Activated CD4-positive, alpha-beta T cell treated with anti-CD3 and anti-CD28 coated beads, Interleukin-2, amount 10 ng/mL, durations not matched to agents 24 days and 14 days (primary cell): ENCODE measurements at regions of chr4 and their contacts with region 1.

Region 1: DNA sequence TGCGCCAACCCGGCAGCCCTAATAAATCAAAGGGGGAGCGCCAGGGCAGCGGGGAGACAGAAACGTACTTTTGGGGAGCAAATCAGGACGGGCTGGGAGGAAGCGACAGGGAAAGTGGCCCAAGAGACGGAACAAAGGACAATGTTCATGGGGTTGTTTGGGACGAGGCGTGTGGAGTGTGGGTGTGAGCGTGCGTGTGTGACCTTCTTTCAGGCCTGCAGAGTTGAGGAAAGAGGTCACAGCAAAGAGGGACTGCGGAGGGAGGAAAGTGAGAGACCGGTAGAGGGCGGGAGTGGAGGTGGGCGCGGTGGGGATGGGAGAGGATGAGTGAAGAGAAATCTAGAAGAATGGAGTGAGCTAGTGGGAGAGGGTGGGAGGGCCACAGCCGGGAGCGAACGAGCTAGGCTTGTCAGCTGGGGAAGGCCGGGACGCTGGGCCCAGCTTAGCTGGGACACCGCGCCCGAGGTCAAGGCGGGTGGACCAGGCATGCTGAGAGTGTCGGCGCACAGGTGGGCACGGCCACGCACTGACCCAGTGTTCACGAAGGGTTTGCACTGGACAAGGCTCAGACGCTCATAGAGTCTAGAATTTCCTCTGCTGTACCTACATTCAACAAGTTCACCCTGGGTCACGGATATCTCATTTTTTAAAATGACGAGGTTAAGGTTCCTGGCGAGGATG is 14.7 kb upstream of the PITX2 start:
- DNase-seq: peak; percentile 46
- H3K4me3 Mint-ChIP-seq: no peak overlapping the region
- H3K27ac Mint-ChIP-seq: peak overlapping the region; percentile 10
- H3K4me1 Mint-ChIP-seq: peaks cover 2% of the 10 kb centered on the region
- H3K27me3 Mint-ChIP-seq: peaks cover 84% of the 10 kb centered on the region

Region 2: DNA sequence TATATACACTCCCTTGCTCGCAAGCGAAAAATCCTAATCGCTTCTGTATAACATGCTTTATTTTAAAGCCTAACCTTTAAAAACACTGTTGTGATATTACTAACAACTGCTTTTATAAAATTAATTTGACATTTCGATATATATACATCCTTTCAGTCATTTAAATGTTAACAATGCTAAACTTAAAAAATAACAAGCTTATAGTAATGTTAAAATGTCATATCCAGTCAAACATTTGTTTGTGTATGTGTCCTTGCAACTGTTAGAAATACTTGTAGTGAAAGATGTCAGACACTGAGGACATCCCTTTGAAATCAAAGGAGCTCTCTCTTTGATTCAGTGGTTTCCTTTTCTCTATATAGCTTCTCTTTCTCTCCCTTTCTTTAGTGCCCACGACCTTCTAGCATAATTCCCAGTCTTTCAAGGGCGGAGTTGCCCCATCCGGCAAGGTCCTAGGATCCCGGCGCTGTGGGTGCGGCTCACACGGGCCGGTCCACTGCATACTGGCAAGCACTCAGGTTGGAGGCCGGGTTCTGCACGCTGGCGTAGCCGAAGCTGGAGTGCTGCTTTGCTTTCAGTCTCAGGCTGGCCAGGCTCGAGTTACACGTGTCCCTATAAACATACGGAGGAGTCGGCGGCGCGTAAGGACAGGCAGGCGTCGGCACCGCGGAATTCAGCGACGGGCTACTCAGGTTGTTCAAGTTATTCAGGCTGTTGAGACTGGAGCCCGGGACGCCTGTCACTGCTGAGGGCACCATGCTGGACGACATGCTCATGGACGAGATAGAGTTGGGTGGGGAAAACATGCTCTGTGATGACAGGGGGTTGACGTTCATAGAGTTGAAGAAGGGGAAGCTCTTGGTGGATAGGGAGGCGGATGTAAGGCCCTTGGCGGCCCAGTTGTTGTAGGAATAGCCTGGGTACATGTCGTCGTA is 19.6 kb before region 1 on chr4:
- intact Hi-C with region 1: loop called (anchors 2 kb)
- DNase-seq: peak; percentile 56
- H3K4me3 Mint-ChIP-seq: no peak overlapping the region
- H3K27ac Mint-ChIP-seq: peak overlapping the region; percentile 57
- H3K4me1 Mint-ChIP-seq: peaks cover 2% of the 10 kb centered on the region
- H3K27me3 Mint-ChIP-seq: peaks cover 89% of the 10 kb centered on the region

Region 3: DNA sequence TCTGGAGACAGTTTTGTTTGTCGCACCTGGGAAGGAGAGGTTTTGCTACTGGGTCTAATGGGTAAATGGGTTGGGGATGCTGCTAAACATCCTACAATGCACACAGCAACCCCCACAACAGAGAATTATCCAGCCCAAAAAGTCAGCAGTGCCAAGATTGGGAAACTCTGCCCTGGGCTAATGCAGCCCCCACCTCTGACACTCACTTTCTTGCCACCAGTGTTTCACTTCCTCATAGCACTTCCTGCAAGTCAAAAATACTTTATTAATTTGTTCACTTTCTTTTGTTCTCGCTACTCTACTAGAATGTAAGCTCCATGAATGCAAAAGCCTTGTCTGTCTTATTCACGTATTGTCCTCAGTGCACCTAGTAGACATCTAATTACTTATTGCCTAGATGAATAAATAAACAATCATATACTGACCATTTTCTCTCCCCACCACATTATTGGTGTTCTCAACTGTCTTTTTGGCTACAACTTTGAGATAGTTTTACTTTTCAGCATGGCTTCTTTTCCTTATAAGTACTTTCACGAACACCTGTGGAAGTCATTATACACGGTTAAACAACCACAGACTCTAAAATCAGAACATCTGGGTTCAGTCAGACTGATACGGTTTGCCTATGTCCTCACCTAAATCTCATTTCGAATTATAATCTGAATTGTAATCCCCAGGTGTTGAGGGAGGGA is 67.3 kb after region 1 on chr4:
- intact Hi-C with region 1: no loop called
- DNase-seq: no peak
- H3K4me3 Mint-ChIP-seq: no peak overlapping the region
- H3K27ac Mint-ChIP-seq: no peak overlapping the region
- H3K4me1 Mint-ChIP-seq: no peaks in the 10 kb centered on the region
- H3K27me3 Mint-ChIP-seq: no peaks in the 10 kb centered on the region